B cell (primary cell): ENCODE measurements at regions of chr2 and their contacts with region 1.

Region 1: GRCh38 chr2:68031542-68032160 is 31.2 kb downstream of the C1D start:
- DNase-seq: peak; percentile 58
- ATAC-seq: no peak
- H3K4me3 ChIP-seq: no peak overlapping the region
- H3K4me3 Mint-ChIP-seq: no peak overlapping the region
- H3K27ac ChIP-seq: no peak overlapping the region
- H3K27ac Mint-ChIP-seq: no peak overlapping the region
- H3K4me1 ChIP-seq: no peaks in the 10 kb centered on the region
- H3K4me1 Mint-ChIP-seq: no peaks in the 10 kb centered on the region
- H3K27me3 ChIP-seq: no peaks in the 10 kb centered on the region
- H3K27me3 Mint-ChIP-seq: no peaks in the 10 kb centered on the region
- CTCF ChIP-seq: peak; percentile 79

Region 2: DNA sequence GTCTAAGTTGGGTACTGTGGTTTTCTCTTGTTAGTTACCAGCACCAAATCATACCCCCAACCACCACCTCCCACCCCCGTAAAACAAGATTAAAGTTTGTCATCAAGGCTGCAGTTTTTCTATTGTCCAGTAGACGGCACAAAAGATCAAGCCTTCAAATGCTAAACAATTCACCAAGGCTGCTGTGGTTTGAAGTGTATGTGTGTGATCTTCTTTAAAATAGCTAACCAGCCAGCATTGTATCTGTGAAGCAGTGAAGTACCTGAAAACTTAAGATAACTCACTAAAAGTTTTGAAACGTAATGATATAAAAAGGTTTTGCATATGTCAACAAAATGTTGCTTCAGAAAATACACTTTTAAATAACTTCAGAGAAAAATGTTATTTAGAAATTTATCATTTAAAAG is 1602.6 kb before region 1 on chr2:
- CTCF ChIA-PET with region 1: no interaction called
- POLR2A ChIA-PET with region 1: no interaction called
- intact Hi-C with region 1: loop called (anchors 5 kb)
- DNase-seq: peak; percentile 25
- ATAC-seq: no peak
- H3K4me3 ChIP-seq: no peak overlapping the region
- H3K4me3 Mint-ChIP-seq: no peak overlapping the region
- H3K27ac ChIP-seq: no peak overlapping the region
- H3K27ac Mint-ChIP-seq: no peak overlapping the region
- H3K4me1 ChIP-seq: peaks cover 14 to 16% of the 10 kb centered on the region in 2 donors
- H3K4me1 Mint-ChIP-seq: peaks cover 16% of the 10 kb centered on the region
- H3K27me3 ChIP-seq: peaks cover 0 to 49% (median 31%) of the 10 kb centered on the region in 4 experiments
- H3K27me3 Mint-ChIP-seq: peaks cover 74% of the 10 kb centered on the region
- CTCF ChIP-seq: peak; percentile 54

Region 3: GRCh38 chr2:67997528-67997900 is 34.1 kb before region 1 on chr2:
- CTCF ChIA-PET with region 1: no interaction called
- POLR2A ChIA-PET with region 1: no interaction called
- intact Hi-C with region 1: no loop called
- DNase-seq: no peak
- ATAC-seq: no peak
- H3K4me3 ChIP-seq: no peak overlapping the region
- H3K4me3 Mint-ChIP-seq: no peak overlapping the region
- H3K27ac ChIP-seq: no peak overlapping the region
- H3K27ac Mint-ChIP-seq: no peak overlapping the region
- H3K4me1 ChIP-seq: no peaks in the 10 kb centered on the region
- H3K4me1 Mint-ChIP-seq: no peaks in the 10 kb centered on the region
- H3K27me3 ChIP-seq: peaks cover 0 to 15% (median 2%) of the 10 kb centered on the region in 4 experiments
- H3K27me3 Mint-ChIP-seq: peaks cover 50% of the 10 kb centered on the region
- CTCF ChIP-seq: no peak

Region 4: GRCh38 chr2:68121873-68122679 is 90.4 kb after region 1 on chr2:
- CTCF ChIA-PET with region 1: no interaction called
- POLR2A ChIA-PET with region 1: no interaction called
- intact Hi-C with region 1: no loop called
- DNase-seq: peak; percentile 81
- ATAC-seq: peak; percentile 34
- H3K4me3 ChIP-seq: peak overlapping the region in 1 of 5 experiments; percentile 34
- H3K4me3 Mint-ChIP-seq: peak overlapping the region; percentile 50
- H3K27ac ChIP-seq: peak overlapping the region in 1 of 2 donors; percentile 88
- H3K27ac Mint-ChIP-seq: peak overlapping the region; percentile 99
- H3K4me1 ChIP-seq: peaks cover 27 to 46% of the 10 kb centered on the region in 2 donors
- H3K4me1 Mint-ChIP-seq: peaks cover 42% of the 10 kb centered on the region
- H3K27me3 ChIP-seq: no peaks in the 10 kb centered on the region
- H3K27me3 Mint-ChIP-seq: no peaks in the 10 kb centered on the region
- CTCF ChIP-seq: peak; percentile 95